Prostate gland (tissue), 2 donors: ENCODE measurements at regions of chrX and their contacts with region 1.

Region 1: GRCh38 chrX:46796574-46797191 is 37.8 kb upstream of the SLC9A7 start:
- DNase-seq: peak; percentile 80
- H3K4me3 ChIP-seq: no peak overlapping the region
- H3K27ac ChIP-seq: no peak overlapping the region
- H3K4me1 ChIP-seq: no peaks in the 10 kb centered on the region
- H3K27me3 ChIP-seq: no peaks in the 10 kb centered on the region
- CTCF ChIP-seq: peak; percentile 40 to 79 (median 66)
- POLR2A ChIP-seq: no peak

Region 2: GRCh38 chrX:46758906-46759644 is 37.6 kb before region 1 on chrX and contains the start of gene SLC9A7:
- intact Hi-C with region 1: loop called (anchors 2 kb)
- DNase-seq: peak; percentile 66
- H3K4me3 ChIP-seq: peak within 1 kb of the TSS; percentile 44 to 56
- H3K27ac ChIP-seq: peak within 1 kb of the TSS; percentile 53 to 76
- H3K4me1 ChIP-seq: no peaks in the 10 kb centered on the region
- H3K27me3 ChIP-seq: no peaks in the 10 kb centered on the region
- CTCF ChIP-seq: peak; percentile 67 to 93 (median 80)
- POLR2A ChIP-seq: peak; percentile 62
- total RNA-seq, gene SLC9A7: 16.5 to 36.5 TPM